B cell (primary cell): ENCODE measurements at regions of chr6 and their contacts with region 1.

Region 1: GRCh38 chr6:73653571-73654424 is at the start of gene SLC17A5:
- DNase-seq: peak; percentile 94
- ATAC-seq: peak; percentile 88
- H3K4me3 ChIP-seq: peak within 1 kb of the TSS; percentile 72 to 99 (median 91)
- H3K4me3 Mint-ChIP-seq: peak within 1 kb of the TSS; percentile 100
- H3K27ac ChIP-seq: peak within 1 kb of the TSS; percentile 96 to 97
- H3K27ac Mint-ChIP-seq: peak within 1 kb of the TSS; percentile 99
- H3K4me1 ChIP-seq: peaks cover 8 to 14% of the 10 kb centered on the region in 2 donors
- H3K4me1 Mint-ChIP-seq: peaks cover 23% of the 10 kb centered on the region
- H3K27me3 ChIP-seq: no peaks in the 10 kb centered on the region
- H3K27me3 Mint-ChIP-seq: no peaks in the 10 kb centered on the region
- CTCF ChIP-seq: no peak
- total RNA-seq, gene SLC17A5: 8.0 and 8.2 TPM in 2 replicates

Region 2: DNA sequence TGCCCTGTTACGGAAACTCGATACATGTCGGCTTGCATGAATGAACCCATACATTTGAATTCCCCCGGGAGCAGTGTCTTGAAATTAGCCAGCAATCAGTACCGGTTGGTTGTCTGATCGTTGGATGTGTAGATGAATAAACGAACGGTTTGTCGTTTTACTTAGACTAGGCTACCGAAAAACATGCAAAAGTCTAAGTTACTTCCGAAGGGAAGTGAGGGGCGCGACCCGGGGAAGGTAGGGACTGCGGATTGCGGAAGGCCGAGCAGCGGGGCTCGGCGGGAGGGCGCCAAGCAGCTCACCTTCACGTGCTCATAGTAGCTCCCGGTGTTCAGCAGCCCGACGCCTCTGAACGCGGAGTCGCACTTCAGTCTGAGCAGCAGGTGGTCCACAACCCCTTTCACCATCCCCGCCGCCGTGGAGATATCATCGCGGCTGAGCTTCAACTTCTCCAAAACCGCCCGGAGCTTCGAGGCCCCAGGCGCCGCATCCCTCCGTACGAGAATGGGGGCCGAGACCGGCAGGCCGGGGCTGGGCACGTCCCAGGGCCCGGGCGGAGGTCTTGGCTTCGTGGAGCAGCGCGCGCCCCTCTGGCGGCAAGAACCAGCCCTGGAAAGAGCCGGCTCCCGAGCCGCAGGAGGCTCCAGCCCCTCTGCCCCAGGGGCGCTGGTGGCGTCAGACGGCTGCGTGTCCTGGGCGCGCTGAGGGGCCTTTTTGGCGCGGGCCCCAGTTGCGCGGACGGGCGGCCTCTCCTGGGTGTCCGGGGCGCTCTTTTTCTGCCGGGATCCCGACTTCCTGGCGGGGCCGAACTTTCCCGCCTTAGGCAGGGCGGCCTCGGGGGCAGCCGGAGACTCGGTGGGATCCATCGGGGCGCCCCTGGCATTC is 202.3 kb before region 1 on chr6:
- CTCF ChIA-PET with region 1: interaction called, 8 read pairs
- POLR2A ChIA-PET with region 1: interaction called, 15 read pairs
- intact Hi-C with region 1: loop called (anchors 5 kb)
- DNase-seq: peak; percentile 82
- ATAC-seq: peak; percentile 56
- H3K4me3 ChIP-seq: peak overlapping the region; percentile 86 to 94 (median 91)
- H3K4me3 Mint-ChIP-seq: peak overlapping the region; percentile 95
- H3K27ac ChIP-seq: peak overlapping the region; percentile 87 to 89
- H3K27ac Mint-ChIP-seq: peak overlapping the region; percentile 91
- H3K4me1 ChIP-seq: peaks cover 16 to 25% of the 10 kb centered on the region in 2 donors
- H3K4me1 Mint-ChIP-seq: peaks cover 23% of the 10 kb centered on the region
- H3K27me3 ChIP-seq: no peaks in the 10 kb centered on the region
- H3K27me3 Mint-ChIP-seq: no peaks in the 10 kb centered on the region
- CTCF ChIP-seq: no peak

Region 3: DNA sequence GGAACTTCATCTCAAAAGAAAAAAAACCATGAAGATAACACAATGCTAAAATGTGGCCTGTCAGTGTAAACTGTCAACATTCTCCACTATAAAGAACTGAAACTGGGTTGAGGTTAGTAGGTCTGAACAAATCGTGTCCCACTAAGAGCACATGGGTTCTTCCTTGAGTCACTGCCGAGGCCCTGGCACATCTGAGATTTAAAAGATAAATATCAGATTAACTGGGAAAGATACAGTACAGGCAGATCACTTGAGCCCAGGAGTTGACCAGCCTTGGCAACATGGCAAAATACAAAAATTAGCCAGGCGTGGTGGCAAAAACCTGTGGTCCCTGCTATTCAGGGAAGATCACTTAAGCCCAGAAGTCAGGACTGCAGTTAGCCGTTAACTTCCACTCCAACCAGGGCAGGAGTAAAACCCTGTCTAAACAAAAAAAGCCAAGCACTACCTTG is 138.6 kb before region 1 on chr6:
- CTCF ChIA-PET with region 1: interaction called, 46 read pairs
- POLR2A ChIA-PET with region 1: interaction called, 49 read pairs
- intact Hi-C with region 1: loop called (anchors 1 kb)
- DNase-seq: no peak
- ATAC-seq: peak; percentile 48
- H3K4me3 ChIP-seq: no peak overlapping the region
- H3K4me3 Mint-ChIP-seq: peak overlapping the region; percentile 70
- H3K27ac ChIP-seq: peak overlapping the region; percentile 53 to 69
- H3K27ac Mint-ChIP-seq: peak overlapping the region; percentile 86
- H3K4me1 ChIP-seq: peaks cover 46 to 56% of the 10 kb centered on the region in 2 donors
- H3K4me1 Mint-ChIP-seq: peaks cover 60% of the 10 kb centered on the region
- H3K27me3 ChIP-seq: no peaks in the 10 kb centered on the region
- H3K27me3 Mint-ChIP-seq: no peaks in the 10 kb centered on the region
- CTCF ChIP-seq: no peak

Region 4: GRCh38 chr6:73580247-73581149 is 73.3 kb before region 1 on chr6:
- CTCF ChIA-PET with region 1: interaction called, 7 read pairs
- POLR2A ChIA-PET with region 1: interaction called, 11 read pairs
- intact Hi-C with region 1: loop called (anchors 1 kb)
- DNase-seq: peak; percentile 80
- ATAC-seq: peak; percentile 79
- H3K4me3 ChIP-seq: peak overlapping the region in 4 of 5 experiments; percentile 31 to 55 (median 46)
- H3K4me3 Mint-ChIP-seq: peak overlapping the region; percentile 87
- H3K27ac ChIP-seq: peak overlapping the region; percentile 91 to 93
- H3K27ac Mint-ChIP-seq: peak overlapping the region; percentile 96
- H3K4me1 ChIP-seq: peaks cover 32 to 34% of the 10 kb centered on the region in 2 donors
- H3K4me1 Mint-ChIP-seq: peaks cover 32% of the 10 kb centered on the region
- H3K27me3 ChIP-seq: no peaks in the 10 kb centered on the region
- H3K27me3 Mint-ChIP-seq: no peaks in the 10 kb centered on the region
- CTCF ChIP-seq: peak; percentile 24

Region 5: DNA sequence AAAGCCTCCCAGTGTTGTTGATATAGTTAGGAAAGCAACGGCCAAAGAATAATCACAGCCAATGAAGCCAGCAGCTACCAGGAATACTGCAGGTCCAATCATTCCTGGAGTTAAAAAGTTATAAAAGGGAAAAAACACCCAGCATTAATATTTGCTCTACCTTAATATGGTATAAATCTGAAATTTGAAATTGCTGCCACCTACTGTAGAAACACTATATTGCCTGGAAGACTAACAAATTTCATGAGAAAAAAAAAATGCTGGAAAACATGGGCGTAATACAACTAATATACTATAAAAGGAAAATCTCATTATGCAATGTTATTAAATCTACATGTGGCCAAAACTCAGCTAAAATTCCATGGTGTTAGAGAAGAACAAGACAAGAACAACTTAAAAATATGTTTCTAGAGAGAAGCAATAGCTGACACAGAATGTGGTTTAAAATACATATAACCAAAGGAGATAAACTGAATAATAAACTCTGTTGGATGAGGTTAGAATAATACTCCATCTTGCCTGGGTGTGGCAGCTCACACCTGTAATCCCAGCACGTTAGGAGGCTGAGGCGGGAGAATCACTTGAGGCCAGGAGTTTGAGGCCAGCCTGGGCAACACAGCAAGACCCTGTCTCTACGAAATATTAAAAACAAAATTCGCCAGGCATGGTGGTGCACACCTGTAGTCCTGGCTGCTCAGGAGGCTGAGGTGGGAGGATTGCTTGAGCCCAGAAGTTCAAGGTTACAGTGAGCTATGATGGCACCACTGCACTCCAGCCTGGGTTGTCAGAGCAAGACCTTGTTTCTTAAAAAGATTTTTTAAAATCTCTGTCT is 43.1 kb before region 1 on chr6:
- CTCF ChIA-PET with region 1: interaction called, 29 read pairs
- POLR2A ChIA-PET with region 1: no interaction called
- intact Hi-C with region 1: no loop called
- DNase-seq: peak; percentile 73
- ATAC-seq: peak; percentile 63
- H3K4me3 ChIP-seq: no peak overlapping the region
- H3K4me3 Mint-ChIP-seq: no peak overlapping the region
- H3K27ac ChIP-seq: no peak overlapping the region
- H3K27ac Mint-ChIP-seq: no peak overlapping the region
- H3K4me1 ChIP-seq: peaks cover 0 to 5% of the 10 kb centered on the region in 2 donors
- H3K4me1 Mint-ChIP-seq: peaks cover 5% of the 10 kb centered on the region
- H3K27me3 ChIP-seq: no peaks in the 10 kb centered on the region
- H3K27me3 Mint-ChIP-seq: no peaks in the 10 kb centered on the region
- CTCF ChIP-seq: peak; percentile 81

Region 6: DNA sequence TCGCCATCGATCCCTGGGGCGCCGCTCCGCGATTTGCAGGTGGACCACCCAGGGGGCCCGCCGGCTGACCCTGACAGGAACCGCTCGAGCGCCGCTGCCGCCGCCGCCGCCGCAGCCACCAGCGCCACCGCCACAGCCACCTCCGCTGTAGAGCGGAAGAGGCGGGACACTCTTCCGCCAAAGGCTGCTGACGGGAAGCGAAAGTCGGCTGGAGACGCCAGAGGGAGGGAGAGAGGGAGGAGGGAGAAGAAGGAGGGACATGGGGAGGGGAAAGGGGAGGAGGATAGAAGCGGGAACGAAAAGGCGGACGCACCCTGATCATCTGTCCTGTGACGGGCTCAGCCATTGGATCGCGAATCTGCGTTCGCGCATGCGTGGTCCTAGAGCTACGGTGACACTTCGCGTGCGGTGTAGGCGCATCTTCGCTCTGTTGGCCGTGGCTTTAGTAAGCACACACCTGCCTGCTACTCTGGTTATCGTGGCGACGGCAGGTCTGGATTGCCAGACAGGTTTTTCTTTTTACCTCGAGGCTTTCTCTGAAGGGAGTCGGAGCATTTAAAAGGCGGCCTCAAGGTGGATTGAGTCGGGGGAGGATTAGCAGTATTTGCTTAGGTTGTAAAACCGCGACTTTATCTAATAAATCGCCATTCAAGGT is 1631.0 kb after region 1 on chr6 and contains the start of gene TMEM30A:
- CTCF ChIA-PET with region 1: no interaction called
- POLR2A ChIA-PET with region 1: interaction called, 3 read pairs
- intact Hi-C with region 1: loop called (anchors 1 kb)
- DNase-seq: peak; percentile 98
- ATAC-seq: peak; percentile 96
- H3K4me3 ChIP-seq: peak within 1 kb of the TSS; percentile 76 to 96 (median 92)
- H3K4me3 Mint-ChIP-seq: no peak within 1 kb of the TSS
- H3K27ac ChIP-seq: peak within 1 kb of the TSS; percentile 78 to 94
- H3K27ac Mint-ChIP-seq: no peak within 1 kb of the TSS
- H3K4me1 ChIP-seq: peaks cover 15 to 28% of the 10 kb centered on the region in 2 donors
- H3K4me1 Mint-ChIP-seq: peaks cover 23% of the 10 kb centered on the region
- H3K27me3 ChIP-seq: no peaks in the 10 kb centered on the region
- H3K27me3 Mint-ChIP-seq: no peaks in the 10 kb centered on the region
- CTCF ChIP-seq: no peak
- total RNA-seq, gene TMEM30A: 53.9 and 55.3 TPM in 2 replicates